GM12878 (cell line): ENCODE measurements at regions of chr14 and their contacts with region 1.

Region 1: DNA sequence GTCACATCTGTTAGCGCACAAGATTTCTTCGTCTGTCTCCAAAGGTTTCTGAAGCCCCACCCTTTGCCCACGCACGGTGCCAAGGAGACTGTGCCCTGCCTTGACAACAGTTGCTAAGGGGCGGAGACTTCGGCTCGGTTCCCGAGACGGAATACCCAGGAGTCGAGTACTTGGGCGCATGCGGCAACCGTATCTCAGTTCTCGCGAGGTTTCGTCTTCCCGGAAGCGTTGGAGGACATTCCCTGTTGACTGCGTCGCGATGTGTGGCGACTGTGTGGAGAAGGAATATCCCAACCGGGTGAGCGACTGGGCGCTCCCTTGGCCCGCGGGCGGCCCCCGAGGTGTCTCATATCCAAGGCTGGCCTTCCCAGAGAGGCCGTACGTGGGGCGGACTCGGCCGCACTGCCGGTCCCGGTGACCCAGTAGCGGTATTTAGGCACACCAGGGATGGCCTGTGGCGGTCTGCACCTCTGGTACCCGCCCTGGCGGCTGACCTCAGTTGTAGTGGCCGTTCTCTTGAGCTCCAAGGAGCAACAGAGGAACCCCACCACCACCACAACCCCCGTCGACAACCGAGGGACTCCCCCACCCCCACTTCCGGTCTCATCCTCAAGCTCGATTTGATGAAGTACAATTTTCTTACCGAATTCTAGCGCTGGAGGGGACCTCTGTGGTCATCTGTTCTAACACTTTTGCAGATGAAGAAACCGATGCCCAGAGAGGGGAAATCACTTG is at the start of gene CHURC1:
- DNase-seq: peak; percentile 93
- ATAC-seq: peak; percentile 98
- H3K4me3 ChIP-seq: peak within 1 kb of the TSS; percentile 79
- H3K27ac ChIP-seq: peak within 1 kb of the TSS; percentile 98
- H3K4me1 ChIP-seq: peaks cover 5% of the 10 kb centered on the region; the same call in 1 of the 2 replicates
- H3K27me3 ChIP-seq: no peaks in the 10 kb centered on the region
- CTCF ChIP-seq: no peak
- EP300 ChIP-seq: no peak
- POLR2A ChIP-seq: peak; percentile 96
- RAD21 ChIP-seq: no peak
- polyA plus RNA-seq, gene CHURC1: 408 to 421 TPM

Region 2: DNA sequence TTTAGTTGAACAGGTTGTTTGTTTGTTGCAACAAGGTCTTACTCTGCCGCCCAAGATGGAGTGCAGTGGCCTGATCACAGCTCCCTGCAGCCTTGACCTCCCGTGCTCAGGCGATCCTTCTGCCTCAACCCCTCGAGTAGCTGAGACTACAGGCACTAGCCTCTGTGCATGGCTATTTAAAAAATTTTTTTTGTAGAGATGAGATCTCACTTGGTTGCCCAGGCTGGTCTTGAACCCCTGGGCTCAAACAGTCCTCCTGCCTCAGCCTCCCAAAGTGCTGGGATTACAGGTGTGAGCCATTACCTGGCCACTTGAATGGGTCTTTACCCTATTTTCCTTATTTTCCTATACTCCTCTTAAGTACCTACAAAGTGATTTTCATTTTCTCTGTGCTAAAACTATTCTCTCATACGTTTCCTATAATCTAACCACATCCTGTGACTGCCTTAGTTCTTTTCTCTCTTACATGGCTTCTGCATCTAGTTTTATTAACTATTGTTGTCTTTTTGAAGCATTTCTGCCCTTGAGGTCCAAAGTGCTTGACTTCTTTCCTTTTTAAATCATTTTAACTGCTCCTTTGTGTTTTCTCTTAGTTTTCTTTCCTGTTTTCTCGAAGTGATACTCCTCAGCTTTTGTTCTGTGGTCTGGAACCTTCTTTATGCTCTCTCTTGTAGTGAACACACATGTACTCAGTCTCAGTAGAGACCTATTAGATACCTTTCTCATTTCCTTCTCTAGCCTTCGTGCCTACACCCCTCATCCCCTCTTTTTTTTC is 14.0 kb after region 1 on chr14:
- CTCF ChIA-PET with region 1: interaction called, 10 read pairs
- POLR2A ChIA-PET with region 1: interaction called, 15 read pairs
- RAD21 ChIA-PET with region 1: interaction called, 9 read pairs
- SMC1A ChIA-PET with region 1: interaction called, 12 read pairs
- in situ Hi-C with region 1: no loop called
- intact Hi-C with region 1: no loop called
- DNase-seq: peak; percentile 46
- ATAC-seq: peak; percentile 89
- H3K4me3 ChIP-seq: no peak overlapping the region
- H3K27ac ChIP-seq: peak overlapping the region; percentile 57
- H3K4me1 ChIP-seq: peaks cover 17% of the 10 kb centered on the region
- H3K27me3 ChIP-seq: no peaks in the 10 kb centered on the region
- CTCF ChIP-seq: no peak
- EP300 ChIP-seq: no peak
- POLR2A ChIP-seq: no peak
- RAD21 ChIP-seq: no peak

Region 3: DNA sequence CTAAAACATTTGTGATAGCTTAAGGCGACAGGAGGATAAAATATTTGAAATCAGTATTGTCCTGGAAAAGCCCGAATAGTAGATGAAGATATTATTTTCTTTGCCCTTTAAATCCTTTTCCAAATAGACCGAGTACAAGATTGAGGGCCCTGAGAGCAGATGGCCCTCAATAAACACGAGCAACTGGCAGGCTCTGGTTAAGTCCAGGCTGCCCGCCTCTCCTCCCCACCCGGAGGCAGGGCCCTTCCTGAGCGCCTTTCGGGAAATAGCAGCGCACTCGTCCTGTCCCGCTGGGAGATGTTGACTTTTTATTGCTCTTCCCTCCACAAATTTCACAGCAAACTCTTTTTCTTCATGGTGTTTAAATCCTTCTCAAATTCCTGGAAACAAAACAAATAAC is 238.7 kb after region 1 on chr14:
- CTCF ChIA-PET with region 1: no interaction called
- POLR2A ChIA-PET with region 1: no interaction called
- RAD21 ChIA-PET with region 1: no interaction called
- SMC1A ChIA-PET with region 1: no interaction called
- in situ Hi-C with region 1: no loop called
- intact Hi-C with region 1: no loop called
- DNase-seq: no peak
- ATAC-seq: no peak
- H3K4me3 ChIP-seq: no peak overlapping the region
- H3K27ac ChIP-seq: no peak overlapping the region
- H3K4me1 ChIP-seq: peaks cover 24% of the 10 kb centered on the region
- H3K27me3 ChIP-seq: no peaks in the 10 kb centered on the region
- CTCF ChIP-seq: no peak
- EP300 ChIP-seq: no peak
- POLR2A ChIP-seq: no peak
- RAD21 ChIP-seq: no peak